ENCODE measurements at regions of chr10 and their contacts with region 1.

Region 1: DNA sequence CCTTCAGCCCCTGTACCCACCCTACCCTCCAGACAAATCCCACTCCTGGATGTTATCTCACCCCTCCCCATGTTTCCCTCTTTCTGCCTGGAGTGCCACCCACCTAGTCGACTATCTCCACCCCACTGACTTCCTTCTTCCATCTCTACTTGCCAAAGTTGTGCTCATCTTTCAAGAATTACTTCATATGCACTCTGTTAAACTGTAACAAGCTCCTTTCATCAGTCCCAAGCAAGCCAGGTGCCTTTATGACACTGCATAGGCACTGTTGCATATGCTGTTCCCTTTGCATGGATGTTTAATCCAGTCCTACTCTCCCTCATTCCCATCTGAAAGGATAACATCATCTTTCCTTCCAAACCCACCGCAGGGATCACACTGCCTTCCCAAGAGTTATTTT is 8.9 kb upstream of the CDK1 start:
- H3K4me3 Mint-ChIP-seq: no peak overlapping the region
- H3K27ac Mint-ChIP-seq: no peak overlapping the region
- H3K4me1 Mint-ChIP-seq: peaks cover 15% of the 10 kb centered on the region
- H3K27me3 Mint-ChIP-seq: peaks cover 7% of the 10 kb centered on the region

Region 2: DNA sequence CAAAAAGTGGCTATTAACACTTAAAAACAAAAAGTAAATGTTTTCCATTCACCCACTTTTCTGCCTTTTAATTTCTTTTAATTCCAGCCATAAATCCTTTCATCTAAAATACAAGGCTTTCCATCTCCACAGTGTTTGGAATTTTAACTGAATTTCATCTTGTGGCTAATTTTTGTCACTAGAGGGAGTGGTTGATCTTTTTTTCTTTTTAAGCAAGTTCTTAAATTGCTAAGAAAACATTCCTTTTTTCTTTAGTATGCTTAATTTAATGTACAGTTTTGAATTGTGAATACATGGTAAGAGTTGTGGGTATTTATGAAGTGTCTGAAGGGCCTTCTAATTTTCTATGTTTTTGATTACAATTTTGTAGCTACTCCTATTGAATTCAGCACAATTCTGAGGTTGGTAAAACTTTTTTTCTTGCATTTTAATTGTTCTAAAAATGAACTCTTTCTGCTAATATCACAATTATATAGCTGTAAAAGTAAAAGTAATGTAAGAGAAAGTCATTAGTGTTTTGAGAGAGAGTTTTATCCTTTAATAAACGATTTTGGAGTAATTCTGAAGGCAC is 324.8 kb before region 1 on chr10:
- intact Hi-C with region 1: loop called (anchors 2 kb)
- H3K4me3 Mint-ChIP-seq: no peak overlapping the region
- H3K27ac Mint-ChIP-seq: no peak overlapping the region
- H3K4me1 Mint-ChIP-seq: peaks cover 9% of the 10 kb centered on the region
- H3K27me3 Mint-ChIP-seq: peaks cover 2% of the 10 kb centered on the region

Region 3: GRCh38 chr10:60733189-60733822 is 36.1 kb before region 1 on chr10:
- intact Hi-C with region 1: no loop called
- H3K4me3 Mint-ChIP-seq: peak overlapping the region; percentile 82
- H3K27ac Mint-ChIP-seq: no peak overlapping the region
- H3K4me1 Mint-ChIP-seq: peaks cover 14% of the 10 kb centered on the region
- H3K27me3 Mint-ChIP-seq: peaks cover 31% of the 10 kb centered on the region

Region 4: DNA sequence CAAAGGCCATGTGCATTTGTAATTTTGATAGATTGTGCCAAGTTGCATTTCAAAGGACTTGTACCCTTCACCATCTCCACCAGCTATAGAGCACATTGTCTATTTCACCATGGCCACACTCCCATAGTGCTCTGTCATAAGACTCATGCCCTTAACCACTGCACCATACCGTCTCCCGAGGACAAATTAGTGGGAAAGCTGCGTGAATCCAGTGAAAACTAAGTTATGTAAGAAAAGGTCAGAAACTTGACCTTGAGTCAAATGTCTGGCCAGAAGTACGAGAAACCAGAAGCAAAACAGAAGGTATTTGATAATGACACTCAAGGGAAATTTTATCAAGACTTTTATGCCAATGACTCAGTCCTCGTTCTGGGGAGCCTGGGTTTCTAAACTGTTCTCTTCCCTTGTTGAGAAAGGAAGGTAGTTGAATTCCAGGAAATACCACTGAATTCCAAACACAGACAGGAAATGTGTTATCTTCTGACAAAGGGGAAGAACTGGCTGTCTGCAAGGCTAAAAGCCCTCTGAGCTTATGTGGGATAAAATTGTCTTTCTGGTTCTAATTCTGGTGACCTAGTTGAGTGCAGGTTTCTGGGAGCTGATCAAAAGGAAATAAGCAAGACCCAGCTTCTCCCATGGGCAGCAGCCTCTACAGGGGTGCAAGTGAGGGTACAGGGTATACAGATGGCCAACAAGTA is 58.5 kb after region 1 on chr10:
- intact Hi-C with region 1: no loop called
- H3K4me3 Mint-ChIP-seq: no peak overlapping the region
- H3K27ac Mint-ChIP-seq: peak overlapping the region; percentile 62
- H3K4me1 Mint-ChIP-seq: peaks cover 13% of the 10 kb centered on the region
- H3K27me3 Mint-ChIP-seq: no peaks in the 10 kb centered on the region